ENCODE measurements at regions of chr6 and their contacts with region 1.

Region 1: DNA sequence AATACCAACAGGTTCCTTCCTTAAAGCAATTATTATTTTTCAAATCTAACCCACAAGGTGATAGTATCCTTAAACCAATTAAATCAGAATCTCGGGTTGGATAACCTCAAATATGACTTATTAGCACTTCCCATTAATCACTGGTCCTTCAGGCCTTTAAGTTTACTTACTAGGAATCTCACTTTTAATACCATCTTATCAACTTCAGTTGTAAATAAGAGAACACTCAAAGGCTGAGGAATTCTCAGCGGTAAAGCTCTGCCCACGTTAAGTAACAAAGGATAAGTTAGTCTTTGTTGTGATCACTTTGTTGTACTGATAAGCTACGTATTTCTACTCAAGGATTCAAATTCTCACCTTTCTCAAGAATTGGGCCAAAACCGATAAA is 82.0 kb downstream of the OR2B2 start:
- DNase-seq: no peak
- H3K4me3 ChIP-seq: peak overlapping the region; percentile 63 to 78 (median 78)
- H3K4me3 Mint-ChIP-seq: peak overlapping the region; percentile 91
- H3K27ac ChIP-seq: peak overlapping the region in 1 of 2 donors; percentile 82
- H3K27ac Mint-ChIP-seq: peak overlapping the region in 6 of 7 donors; percentile 54 to 90 (median 86)
- H3K4me1 ChIP-seq: peaks cover 13 to 20% of the 10 kb centered on the region in 2 donors
- H3K4me1 Mint-ChIP-seq: peaks cover 27% of the 10 kb centered on the region
- H3K27me3 ChIP-seq: no peaks in the 10 kb centered on the region
- H3K27me3 Mint-ChIP-seq: no peaks in the 10 kb centered on the region
- CTCF ChIP-seq: no peak

Region 2: GRCh38 chr6:27816906-27817305 is 13.3 kb before region 1 on chr6:
- intact Hi-C with region 1: loop called in 1 of 2 experiments (anchors 2 kb)
- DNase-seq: no peak
- H3K4me3 ChIP-seq: no peak overlapping the region
- H3K4me3 Mint-ChIP-seq: no peak overlapping the region
- H3K27ac ChIP-seq: no peak overlapping the region
- H3K27ac Mint-ChIP-seq: no peak overlapping the region
- H3K4me1 ChIP-seq: peaks cover 10 to 15% of the 10 kb centered on the region in 2 donors
- H3K4me1 Mint-ChIP-seq: peaks cover 23% of the 10 kb centered on the region
- H3K27me3 ChIP-seq: no peaks in the 10 kb centered on the region
- H3K27me3 Mint-ChIP-seq: peaks cover 0 to 2% (median 0%) of the 10 kb centered on the region in 3 donors
- CTCF ChIP-seq: no peak